ENCODE measurements at regions of chr11 and their contacts with region 1.

Region 1: DNA sequence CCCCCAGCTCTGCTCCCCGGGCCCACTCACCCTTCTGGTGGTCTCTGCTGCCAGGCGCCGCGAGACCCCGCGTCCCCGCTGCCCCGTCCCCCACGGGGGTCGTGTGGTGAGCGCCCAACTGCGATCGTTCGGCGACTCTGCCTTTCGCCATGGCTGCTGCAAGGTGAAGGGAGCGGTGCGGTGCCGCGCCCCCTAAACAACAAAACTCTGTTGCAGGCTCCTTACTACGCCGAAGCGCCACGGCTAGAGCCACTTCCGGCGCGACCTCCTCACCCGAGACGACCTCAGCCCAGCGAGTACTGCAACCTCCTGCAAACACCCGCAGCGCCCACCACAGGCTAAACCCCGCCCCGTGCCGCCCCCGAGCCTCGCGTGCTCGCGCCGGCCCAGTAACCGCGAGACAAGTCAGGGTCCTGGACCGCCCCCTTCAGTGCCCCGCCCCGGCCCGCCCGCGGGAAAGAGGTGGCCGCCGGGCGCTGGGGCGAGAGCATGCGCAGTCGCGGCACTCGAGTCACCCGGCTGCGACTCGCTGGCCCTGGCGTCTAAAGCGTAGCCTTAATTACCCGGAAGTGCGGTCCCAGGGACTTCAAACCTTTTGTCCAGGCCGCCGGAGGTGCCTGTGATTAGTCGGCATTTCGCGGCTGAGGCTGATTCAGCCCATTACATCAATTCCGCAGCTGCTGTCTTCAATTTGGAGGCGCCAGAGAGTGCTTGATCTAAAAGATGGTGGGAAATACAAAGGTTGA is at the start of gene TMEM41B:
- DNase-seq: peak; percentile 98 to 99
- ATAC-seq: peak; percentile 90 to 99 (median 95)
- H3K4me3 ChIP-seq: peak within 1 kb of the TSS; percentile 97
- H3K4me3 Mint-ChIP-seq: peak within 1 kb of the TSS; percentile 99
- H3K27ac ChIP-seq: peak within 1 kb of the TSS; percentile 94
- H3K27ac Mint-ChIP-seq: peak within 1 kb of the TSS; percentile 94 to 100
- H3K4me1 ChIP-seq: peaks cover 17% of the 10 kb centered on the region
- H3K4me1 Mint-ChIP-seq: peaks cover 35% of the 10 kb centered on the region in 2 donors
- H3K27me3 ChIP-seq: no peaks in the 10 kb centered on the region
- H3K27me3 Mint-ChIP-seq: peaks cover 13 to 19% of the 10 kb centered on the region in 2 donors
- CTCF ChIP-seq: no peak
- total RNA-seq, gene TMEM41B: 28.1 to 37.0 (median 34.0) TPM

Region 2: DNA sequence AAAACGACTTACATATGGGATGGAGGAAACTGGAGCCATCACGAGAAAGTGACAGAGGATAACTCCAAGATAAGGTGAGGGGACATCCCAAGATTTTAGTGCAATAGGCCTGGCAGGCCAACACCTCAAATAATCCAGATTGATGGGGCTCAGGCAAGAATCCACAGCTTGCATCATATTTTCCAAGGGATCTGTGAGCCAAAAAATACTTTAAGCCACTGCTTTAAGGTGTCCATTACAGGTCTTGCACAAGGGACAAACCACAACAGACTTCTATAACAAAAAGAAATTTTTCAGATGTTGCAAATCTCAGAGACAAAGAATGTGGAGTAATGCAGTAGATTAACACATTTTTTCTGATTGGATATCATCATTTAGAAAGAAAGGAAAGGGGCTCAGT is 94.9 kb before region 1 on chr11:
- intact Hi-C with region 1: no loop called
- DNase-seq: no peak
- ATAC-seq: no peak
- H3K4me3 ChIP-seq: no peak overlapping the region
- H3K4me3 Mint-ChIP-seq: no peak overlapping the region
- H3K27ac ChIP-seq: no peak overlapping the region
- H3K27ac Mint-ChIP-seq: no peak overlapping the region
- H3K4me1 ChIP-seq: no peaks in the 10 kb centered on the region
- H3K4me1 Mint-ChIP-seq: no peaks in the 10 kb centered on the region
- H3K27me3 ChIP-seq: no peaks in the 10 kb centered on the region
- H3K27me3 Mint-ChIP-seq: no peaks in the 10 kb centered on the region
- CTCF ChIP-seq: no peak

Region 3: DNA sequence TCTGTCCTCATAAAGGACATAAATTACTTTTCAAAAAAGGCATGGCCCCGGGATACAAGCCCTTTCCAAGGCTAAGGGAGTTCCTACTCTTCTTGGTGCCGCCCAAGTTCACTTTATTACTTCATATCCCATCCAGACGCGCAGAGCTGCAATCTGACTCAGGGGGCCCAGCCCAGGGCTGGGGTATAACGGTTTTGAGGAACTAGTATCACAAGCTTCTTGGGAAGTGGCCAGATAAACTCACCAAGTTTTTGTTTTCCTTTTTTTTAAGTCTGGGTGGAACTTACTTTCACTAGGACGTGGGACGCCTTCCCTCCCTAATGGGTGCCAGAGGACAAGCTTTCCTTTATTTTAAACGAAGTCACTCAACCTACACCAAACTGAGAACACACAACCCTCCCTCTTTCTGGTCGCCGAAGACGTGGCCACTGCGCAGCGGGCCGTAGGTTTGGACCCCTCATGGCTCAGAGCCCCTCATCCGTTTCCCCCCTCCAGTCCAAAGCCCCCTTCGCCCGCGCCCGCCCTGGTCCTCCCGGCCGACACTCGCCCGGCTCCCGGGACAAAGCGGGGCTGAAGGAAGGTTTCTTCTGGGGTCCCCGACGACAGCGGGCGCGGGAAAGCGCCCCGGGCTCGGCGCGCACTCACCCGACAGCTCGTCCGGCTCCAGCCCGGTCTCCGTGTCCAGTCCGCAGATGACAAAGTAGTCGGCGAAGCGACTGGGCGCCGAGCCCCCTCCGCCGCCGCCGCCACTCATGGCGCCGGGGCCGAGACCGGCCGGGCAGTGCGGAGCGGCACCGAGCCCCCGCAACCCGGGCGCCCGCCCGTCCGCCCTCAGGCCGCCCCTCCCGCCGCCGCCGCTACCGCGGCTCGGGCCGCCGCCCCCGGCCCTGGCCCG is 49.9 kb before region 1 on chr11:
- intact Hi-C with region 1: loop called (anchors 1 kb)
- DNase-seq: peak; percentile 30 to 49
- ATAC-seq: peak; percentile 16 to 57 (median 27)
- H3K4me3 ChIP-seq: peak overlapping the region; percentile 85
- H3K4me3 Mint-ChIP-seq: peak overlapping the region; percentile 94
- H3K27ac ChIP-seq: peak overlapping the region; percentile 73
- H3K27ac Mint-ChIP-seq: peak overlapping the region; percentile 93 to 94
- H3K4me1 ChIP-seq: peaks cover 23% of the 10 kb centered on the region
- H3K4me1 Mint-ChIP-seq: peaks cover 22 to 33% of the 10 kb centered on the region in 2 donors
- H3K27me3 ChIP-seq: no peaks in the 10 kb centered on the region
- H3K27me3 Mint-ChIP-seq: peaks cover 0 to under 1% of the 10 kb centered on the region in 2 donors
- CTCF ChIP-seq: no peak

Region 4: GRCh38 chr11:9280655-9281301 is 33.7 kb before region 1 on chr11:
- intact Hi-C with region 1: loop called (anchors 2 kb)
- DNase-seq: peak in 1 of 2 donors; percentile 84
- ATAC-seq: peak; percentile 50 to 93 (median 84)
- H3K4me3 ChIP-seq: no peak overlapping the region
- H3K4me3 Mint-ChIP-seq: peak overlapping the region; percentile 81
- H3K27ac ChIP-seq: no peak overlapping the region
- H3K27ac Mint-ChIP-seq: peak overlapping the region in 1 of 2 donors; percentile 75
- H3K4me1 ChIP-seq: peaks cover 13% of the 10 kb centered on the region
- H3K4me1 Mint-ChIP-seq: peaks cover 9 to 14% of the 10 kb centered on the region in 2 donors
- H3K27me3 ChIP-seq: no peaks in the 10 kb centered on the region
- H3K27me3 Mint-ChIP-seq: no peaks in the 10 kb centered on the region
- CTCF ChIP-seq: no peak

Region 5: GRCh38 chr11:9363954-9364912 is 49.8 kb after region 1 on chr11:
- intact Hi-C with region 1: loop called (anchors 1 kb)
- DNase-seq: peak; percentile 83 to 89
- ATAC-seq: peak; percentile 91 to 96 (median 96)
- H3K4me3 ChIP-seq: peak overlapping the region; percentile 47
- H3K4me3 Mint-ChIP-seq: peak overlapping the region; percentile 86
- H3K27ac ChIP-seq: peak overlapping the region; percentile 89
- H3K27ac Mint-ChIP-seq: peak overlapping the region; percentile 90 to 94
- H3K4me1 ChIP-seq: peaks cover 13% of the 10 kb centered on the region
- H3K4me1 Mint-ChIP-seq: peaks cover 4 to 9% of the 10 kb centered on the region in 2 donors
- H3K27me3 ChIP-seq: no peaks in the 10 kb centered on the region
- H3K27me3 Mint-ChIP-seq: no peaks in the 10 kb centered on the region
- CTCF ChIP-seq: no peak

Region 6: DNA sequence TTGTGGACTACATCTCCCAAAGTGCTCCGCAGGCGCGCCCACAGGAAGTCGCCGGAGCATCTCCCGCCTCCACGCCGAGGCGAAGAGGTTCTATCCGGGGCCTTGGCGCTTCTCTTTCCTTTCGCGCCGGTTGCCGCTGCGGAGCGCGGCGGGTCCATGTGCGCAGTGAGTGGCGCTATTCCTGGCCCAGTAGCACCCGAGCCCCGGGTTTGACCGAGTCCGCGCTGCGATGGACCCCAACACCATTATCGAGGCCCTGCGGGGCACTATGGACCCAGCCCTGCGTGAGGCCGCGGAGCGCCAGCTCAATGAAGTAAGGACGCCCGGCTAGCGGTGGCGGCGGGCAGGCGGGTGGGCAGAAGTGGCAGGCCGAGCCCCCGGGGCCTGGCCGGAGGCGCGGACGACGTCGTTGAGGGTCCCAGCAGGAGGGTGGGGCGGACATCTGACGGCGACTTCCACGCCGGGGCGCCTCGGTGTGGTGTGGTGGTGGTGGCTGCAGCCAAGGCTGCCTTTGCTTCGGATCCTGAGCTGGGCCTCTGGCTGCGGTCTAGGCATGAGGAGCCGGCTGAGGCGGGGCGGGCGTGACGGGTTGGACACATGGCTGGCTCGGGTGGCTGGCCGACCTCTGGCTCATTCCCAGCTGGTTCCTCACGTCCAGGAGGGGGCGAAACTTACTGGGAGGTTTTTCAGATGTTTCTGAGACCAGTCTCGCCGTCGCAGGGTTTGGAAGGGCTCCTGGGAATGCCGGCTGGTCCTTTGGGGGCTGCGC is 70.3 kb after region 1 on chr11 and contains the start of gene IPO7:
- intact Hi-C with region 1: loop called (anchors 1 kb)
- DNase-seq: peak; percentile 77 to 92
- ATAC-seq: peak; percentile 97 to 98 (median 97)
- H3K4me3 ChIP-seq: peak within 1 kb of the TSS; percentile 74
- H3K4me3 Mint-ChIP-seq: peak within 1 kb of the TSS; percentile 95
- H3K27ac ChIP-seq: peak within 1 kb of the TSS; percentile 68
- H3K27ac Mint-ChIP-seq: peak within 1 kb of the TSS; percentile 91 to 96
- H3K4me1 ChIP-seq: peaks cover 12% of the 10 kb centered on the region
- H3K4me1 Mint-ChIP-seq: peaks cover 33 to 35% of the 10 kb centered on the region in 2 donors
- H3K27me3 ChIP-seq: no peaks in the 10 kb centered on the region
- H3K27me3 Mint-ChIP-seq: no peaks in the 10 kb centered on the region
- CTCF ChIP-seq: no peak
- total RNA-seq, gene IPO7: 47.2 to 62.3 (median 58.0) TPM

Region 7: GRCh38 chr11:9498457-9499078 is 184.1 kb after region 1 on chr11:
- intact Hi-C with region 1: no loop called
- DNase-seq: no peak
- ATAC-seq: no peak
- H3K4me3 ChIP-seq: no peak overlapping the region
- H3K4me3 Mint-ChIP-seq: no peak overlapping the region
- H3K27ac ChIP-seq: no peak overlapping the region
- H3K27ac Mint-ChIP-seq: no peak overlapping the region
- H3K4me1 ChIP-seq: peaks cover 5% of the 10 kb centered on the region
- H3K4me1 Mint-ChIP-seq: peaks cover 12 to 13% of the 10 kb centered on the region in 2 donors
- H3K27me3 ChIP-seq: no peaks in the 10 kb centered on the region
- H3K27me3 Mint-ChIP-seq: no peaks in the 10 kb centered on the region
- CTCF ChIP-seq: no peak